Caco-2 (cell line): ENCODE measurements at regions of chr1 and their contacts with region 1.

Region 1: DNA sequence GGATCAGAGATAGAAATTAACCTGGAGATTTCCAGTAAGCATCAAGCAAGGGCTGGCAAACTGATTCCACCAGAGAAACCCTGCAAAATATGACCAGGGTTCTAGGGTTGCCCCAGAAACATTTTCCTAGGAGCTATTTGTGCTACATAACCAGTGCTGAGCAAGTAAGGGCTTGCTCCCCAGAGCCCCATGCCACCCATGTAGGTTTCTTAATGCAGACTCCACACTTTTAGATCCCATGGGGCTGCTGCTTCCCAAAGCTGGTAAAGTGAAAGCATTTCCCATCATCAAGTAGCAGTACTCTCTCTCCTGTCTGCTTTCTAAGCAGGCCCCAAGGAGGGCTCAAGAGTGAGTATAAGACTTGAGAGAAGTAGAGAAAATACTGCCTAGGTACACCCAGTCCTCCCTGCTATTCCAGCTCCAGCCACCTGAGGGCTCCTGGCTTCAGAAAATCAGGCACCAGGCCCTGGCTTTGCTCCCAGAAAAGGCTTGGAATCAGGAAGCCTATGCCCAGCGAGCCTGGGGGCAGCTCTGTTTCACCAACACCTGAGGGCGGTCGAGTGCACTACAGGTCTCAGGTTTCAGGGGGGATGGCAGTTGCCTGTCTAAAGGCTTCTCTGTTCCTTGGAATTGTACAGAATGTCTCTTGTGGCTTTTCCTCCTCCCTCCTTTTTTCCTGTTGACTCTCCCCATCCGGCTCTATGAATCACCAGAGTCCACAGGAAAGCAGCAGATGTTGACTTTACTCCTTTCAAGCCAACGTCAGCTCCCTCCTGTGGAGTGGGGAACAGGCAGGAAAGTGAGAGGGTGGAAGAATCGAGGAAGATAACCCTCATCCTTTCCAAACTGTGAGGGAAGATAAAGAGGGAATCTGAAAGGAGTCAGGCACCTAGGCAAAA is 6.2 kb upstream of the ANKRD35 start:
- DNase-seq: peak; percentile 95 to 97
- H3K4me3 ChIP-seq: no peak overlapping the region
- H3K4me3 Mint-ChIP-seq: peak overlapping the region; percentile 66
- H3K27ac Mint-ChIP-seq: peak overlapping the region; percentile 84
- H3K4me1 ChIP-seq: peaks cover 8% of the 10 kb centered on the region
- H3K4me1 Mint-ChIP-seq: peaks cover 7% of the 10 kb centered on the region
- H3K27me3 ChIP-seq: no peaks in the 10 kb centered on the region
- H3K27me3 Mint-ChIP-seq: no peaks in the 10 kb centered on the region
- CTCF ChIP-seq: peak; percentile 91 to 95

Region 2: DNA sequence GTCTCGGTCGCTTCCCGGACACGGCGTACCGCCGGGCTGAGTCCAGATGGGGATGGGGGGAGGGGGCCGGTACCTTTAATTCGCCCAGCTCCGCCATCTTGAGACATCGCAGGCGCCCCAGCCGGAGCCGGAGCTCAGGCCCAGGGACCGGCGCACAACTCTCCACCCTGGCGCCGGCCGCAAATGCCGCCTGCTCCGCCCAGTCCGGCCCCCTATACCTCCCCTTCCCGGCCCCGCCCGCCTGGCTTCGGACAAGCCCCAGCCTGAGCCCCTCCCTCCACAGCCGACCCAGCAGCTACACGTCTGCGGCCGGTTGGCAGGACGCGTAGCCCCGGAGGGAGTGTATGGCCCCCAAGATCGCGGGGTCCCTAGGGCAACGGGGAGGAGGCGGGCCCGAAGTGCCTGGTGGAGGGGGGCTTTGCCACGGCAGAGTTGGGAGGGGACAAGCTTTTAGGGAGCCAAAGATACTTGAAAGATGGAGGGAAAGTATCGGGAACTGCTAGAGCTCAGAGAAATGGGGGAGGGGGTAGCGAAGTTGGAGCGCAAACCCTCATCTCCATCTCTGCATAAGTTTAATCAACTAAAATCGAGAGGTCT is 32.8 kb before region 1 on chr1 and contains the start of gene PIAS3:
- CTCF ChIA-PET with region 1: interaction called, 32 read pairs
- POLR2A ChIA-PET with region 1: interaction called, 5 read pairs
- intact Hi-C with region 1: no loop called
- DNase-seq: peak; percentile 96 to 97
- H3K4me3 ChIP-seq: peak within 1 kb of the TSS; percentile 85
- H3K4me3 Mint-ChIP-seq: peak within 1 kb of the TSS; percentile 92
- H3K27ac Mint-ChIP-seq: peak within 1 kb of the TSS; percentile 78
- H3K4me1 ChIP-seq: peaks cover 3% of the 10 kb centered on the region; the same call in 1 of the 2 replicates
- H3K4me1 Mint-ChIP-seq: peaks cover 7% of the 10 kb centered on the region
- H3K27me3 ChIP-seq: no peaks in the 10 kb centered on the region
- H3K27me3 Mint-ChIP-seq: no peaks in the 10 kb centered on the region
- CTCF ChIP-seq: no peak
- total RNA-seq, gene PIAS3: 20.3 and 22.0 TPM in 2 replicates

Region 3: DNA sequence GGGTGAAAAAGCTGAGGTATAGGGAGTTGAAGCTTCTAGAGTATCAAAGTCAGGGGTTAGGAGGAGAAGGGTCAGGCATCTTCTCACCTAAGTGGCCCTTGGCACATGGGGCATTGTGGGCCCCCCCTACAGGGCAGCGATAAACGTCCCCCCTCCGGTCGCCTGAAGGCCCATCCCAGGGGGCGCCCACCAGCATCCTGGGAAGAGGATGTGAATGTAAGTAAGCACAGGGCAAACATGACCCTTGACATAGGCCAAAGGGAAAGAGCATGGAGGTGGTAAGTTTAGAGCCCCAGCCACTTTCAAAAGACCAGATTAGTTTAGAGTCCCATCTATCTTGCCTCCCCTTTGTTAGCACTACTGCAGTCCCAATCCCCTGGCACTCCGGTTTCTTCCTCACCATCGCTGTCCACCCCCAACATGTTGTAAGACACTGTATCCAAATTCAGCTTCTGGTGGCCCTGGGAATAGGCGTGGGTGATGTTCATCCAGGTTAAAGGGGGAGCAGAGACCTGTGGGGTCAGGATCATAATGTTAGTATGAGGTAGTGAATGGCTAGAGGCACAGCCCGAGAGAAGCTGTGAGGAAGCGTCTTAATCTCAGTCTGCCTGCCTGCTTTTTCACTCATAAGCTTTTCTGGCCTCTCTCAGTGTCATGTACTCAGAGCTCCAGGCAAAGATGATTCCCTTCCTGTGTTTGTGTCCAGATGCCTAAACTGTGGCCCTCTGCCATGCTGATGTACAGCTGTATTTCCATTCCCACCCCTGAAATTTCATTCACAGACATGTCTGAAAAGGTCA is 15.3 kb after region 1 on chr1:
- CTCF ChIA-PET with region 1: interaction called, 30 read pairs
- POLR2A ChIA-PET with region 1: no interaction called
- intact Hi-C with region 1: loop called (anchors 1 kb)
- DNase-seq: no peak
- H3K4me3 ChIP-seq: no peak overlapping the region
- H3K4me3 Mint-ChIP-seq: no peak overlapping the region
- H3K27ac Mint-ChIP-seq: no peak overlapping the region
- H3K4me1 ChIP-seq: no peaks in the 10 kb centered on the region
- H3K4me1 Mint-ChIP-seq: no peaks in the 10 kb centered on the region
- H3K27me3 ChIP-seq: no peaks in the 10 kb centered on the region
- H3K27me3 Mint-ChIP-seq: no peaks in the 10 kb centered on the region
- CTCF ChIP-seq: no peak

Region 4: DNA sequence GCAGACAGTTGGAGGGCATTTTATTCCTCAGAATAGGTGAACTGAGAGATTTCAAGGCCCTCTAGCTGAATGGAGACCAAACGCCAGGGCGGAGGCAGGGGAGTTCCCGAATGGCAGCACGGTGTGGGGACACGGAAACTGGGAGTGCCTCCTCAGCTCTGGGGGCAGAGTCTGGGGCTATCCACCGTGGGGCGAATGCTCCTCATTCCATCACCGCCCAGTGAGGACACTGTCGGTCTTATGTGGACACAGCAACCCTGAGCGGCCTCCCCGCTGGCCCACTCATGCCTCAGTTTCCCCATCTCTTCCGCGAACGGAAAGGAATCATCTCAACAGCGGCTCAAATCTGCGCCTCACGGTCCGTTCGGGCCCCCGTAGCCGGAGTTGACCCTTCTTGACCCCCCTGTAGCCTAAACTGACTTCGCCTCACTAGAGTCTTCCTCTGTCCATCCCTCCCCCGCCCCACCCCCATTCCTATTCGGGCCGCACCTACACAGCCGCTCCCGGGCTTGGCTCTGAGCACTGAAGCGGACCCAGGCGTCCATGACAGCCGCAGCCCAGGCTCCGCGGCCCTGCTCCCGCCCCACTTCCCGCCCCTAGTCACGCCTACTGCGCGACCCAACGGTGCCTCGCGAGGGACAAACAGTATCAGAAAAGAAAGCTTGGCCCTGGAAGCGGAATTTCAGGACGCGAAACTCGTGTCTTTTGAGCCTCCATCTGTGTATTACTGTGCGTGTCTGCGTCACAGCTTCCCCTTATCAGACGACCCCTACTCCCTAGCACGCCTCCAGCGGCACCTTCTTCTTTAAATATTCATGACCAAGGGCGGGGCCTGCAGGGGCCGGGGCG is 26.5 kb after region 1 on chr1 and contains the start of gene PEX11B:
- CTCF ChIA-PET with region 1: interaction called, 12 read pairs
- POLR2A ChIA-PET with region 1: no interaction called
- intact Hi-C with region 1: no loop called
- DNase-seq: peak; percentile 83 to 88
- H3K4me3 ChIP-seq: peak within 1 kb of the TSS; percentile 76
- H3K4me3 Mint-ChIP-seq: peak within 1 kb of the TSS; percentile 94
- H3K27ac Mint-ChIP-seq: peak within 1 kb of the TSS; percentile 79
- H3K4me1 ChIP-seq: no peaks in the 10 kb centered on the region
- H3K4me1 Mint-ChIP-seq: peaks cover 7% of the 10 kb centered on the region
- H3K27me3 ChIP-seq: no peaks in the 10 kb centered on the region
- H3K27me3 Mint-ChIP-seq: no peaks in the 10 kb centered on the region
- CTCF ChIP-seq: no peak
- total RNA-seq, gene PEX11B: 14.5 and 16.1 TPM in 2 replicates

Region 5: GRCh38 chr1:145936247-145936646 is 44.4 kb after region 1 on chr1:
- CTCF ChIA-PET with region 1: no interaction called
- POLR2A ChIA-PET with region 1: no interaction called
- intact Hi-C with region 1: no loop called
- DNase-seq: no peak
- H3K4me3 ChIP-seq: no peak overlapping the region
- H3K4me3 Mint-ChIP-seq: no peak overlapping the region
- H3K27ac Mint-ChIP-seq: no peak overlapping the region
- H3K4me1 ChIP-seq: peaks cover 13% of the 10 kb centered on the region; the same call in 1 of the 2 replicates
- H3K4me1 Mint-ChIP-seq: peaks cover 8% of the 10 kb centered on the region
- H3K27me3 ChIP-seq: no peaks in the 10 kb centered on the region
- H3K27me3 Mint-ChIP-seq: no peaks in the 10 kb centered on the region
- CTCF ChIP-seq: no peak

Region 6: GRCh38 chr1:145957443-145958319 is 65.8 kb after region 1 on chr1 and contains the start of gene LIX1L:
- CTCF ChIA-PET with region 1: interaction called, 3 read pairs
- POLR2A ChIA-PET with region 1: interaction called, 3 read pairs
- intact Hi-C with region 1: loop called (anchors 2 kb)
- DNase-seq: peak; percentile 91 to 92
- H3K4me3 ChIP-seq: peak within 1 kb of the TSS; percentile 46
- H3K4me3 Mint-ChIP-seq: peak within 1 kb of the TSS; percentile 68
- H3K27ac Mint-ChIP-seq: no peak within 1 kb of the TSS
- H3K4me1 ChIP-seq: peaks cover 21% of the 10 kb centered on the region
- H3K4me1 Mint-ChIP-seq: peaks cover 20% of the 10 kb centered on the region
- H3K27me3 ChIP-seq: no peaks in the 10 kb centered on the region; the same call in 1 of the 2 replicates
- H3K27me3 Mint-ChIP-seq: peaks cover 14% of the 10 kb centered on the region
- CTCF ChIP-seq: no peak
- total RNA-seq, gene LIX1L: 0.82 and 1.1 TPM in 2 replicates

Region 7: DNA sequence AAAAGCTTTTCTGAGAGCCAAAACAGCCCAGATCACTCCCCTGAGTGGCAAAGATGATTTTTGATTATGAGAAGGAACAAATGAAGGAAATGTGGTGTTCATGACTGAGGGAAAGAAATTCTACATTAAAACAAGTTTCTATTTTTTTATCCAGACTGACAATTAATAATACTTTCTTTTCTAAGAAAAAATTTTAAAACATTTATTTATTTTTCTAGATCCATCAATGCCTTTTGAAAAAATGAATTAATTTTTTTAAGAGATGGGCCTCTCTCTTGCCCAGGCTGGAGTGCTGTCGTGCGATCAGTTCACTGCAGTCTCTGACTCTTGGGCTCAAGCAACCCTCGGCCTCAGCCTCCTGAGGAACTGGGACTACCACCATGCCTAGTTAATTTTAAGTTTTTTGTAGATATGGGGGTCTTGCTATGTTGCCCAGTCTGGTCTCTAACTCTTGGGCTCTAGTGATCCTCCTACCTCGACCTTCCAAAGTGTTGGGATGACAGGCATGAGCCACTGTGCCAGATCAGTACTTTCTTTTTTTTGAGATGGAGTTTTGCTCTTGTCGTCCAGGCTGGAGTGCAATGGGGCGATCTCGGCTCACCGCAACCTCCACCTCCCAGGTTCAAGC is 115.8 kb after region 1 on chr1:
- CTCF ChIA-PET with region 1: interaction called, 5 read pairs
- POLR2A ChIA-PET with region 1: no interaction called
- intact Hi-C with region 1: loop called (anchors 1 kb)
- DNase-seq: no peak
- H3K4me3 ChIP-seq: no peak overlapping the region
- H3K4me3 Mint-ChIP-seq: no peak overlapping the region
- H3K27ac Mint-ChIP-seq: no peak overlapping the region
- H3K4me1 ChIP-seq: 0 out of 2 replicates have a peak, but pooled peaks cover 3% of the 10 kb centered on the region
- H3K4me1 Mint-ChIP-seq: peaks cover 5% of the 10 kb centered on the region
- H3K27me3 ChIP-seq: no peaks in the 10 kb centered on the region
- H3K27me3 Mint-ChIP-seq: no peaks in the 10 kb centered on the region
- CTCF ChIP-seq: no peak

Region 8: GRCh38 chr1:146036965-146037646 is 145.3 kb after region 1 on chr1:
- CTCF ChIA-PET with region 1: interaction called, 4 read pairs
- POLR2A ChIA-PET with region 1: no interaction called
- intact Hi-C with region 1: loop called (anchors 5 kb)
- DNase-seq: peak; percentile 84 to 90
- H3K4me3 ChIP-seq: peak overlapping the region; percentile 82
- H3K4me3 Mint-ChIP-seq: peak overlapping the region; percentile 92
- H3K27ac Mint-ChIP-seq: peak overlapping the region; percentile 100
- H3K4me1 ChIP-seq: 0 out of 2 replicates have a peak, but pooled peaks cover 3% of the 10 kb centered on the region
- H3K4me1 Mint-ChIP-seq: peaks cover 13% of the 10 kb centered on the region
- H3K27me3 ChIP-seq: no peaks in the 10 kb centered on the region
- H3K27me3 Mint-ChIP-seq: peaks cover 8% of the 10 kb centered on the region
- CTCF ChIP-seq: no peak